ENCODE measurements at regions of chr1 and their contacts with region 1.

Region 1: DNA sequence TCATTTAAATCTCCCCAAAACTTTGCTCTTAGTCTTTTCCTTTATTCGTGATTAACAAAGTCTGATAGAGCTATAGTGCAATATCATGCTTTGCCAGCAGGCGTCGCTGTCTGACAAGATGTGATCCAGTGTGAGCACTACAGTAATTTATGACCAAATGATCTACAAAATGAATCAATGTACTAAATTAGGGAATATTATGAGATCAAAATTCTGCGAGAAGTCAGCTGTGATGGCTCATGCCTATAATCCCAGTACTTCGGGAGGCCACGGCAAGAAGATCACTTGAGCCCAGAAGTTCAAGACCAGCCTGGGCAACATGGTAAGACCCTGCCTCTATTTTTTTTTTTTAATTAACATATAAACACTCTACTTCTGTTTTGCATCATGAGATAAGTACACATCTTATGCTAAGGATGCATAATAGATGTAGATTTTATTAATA is 3.6 kb upstream of the SPSB1 start:
- DNase-seq: peak; percentile 82
- ATAC-seq: no peak

Region 2: DNA sequence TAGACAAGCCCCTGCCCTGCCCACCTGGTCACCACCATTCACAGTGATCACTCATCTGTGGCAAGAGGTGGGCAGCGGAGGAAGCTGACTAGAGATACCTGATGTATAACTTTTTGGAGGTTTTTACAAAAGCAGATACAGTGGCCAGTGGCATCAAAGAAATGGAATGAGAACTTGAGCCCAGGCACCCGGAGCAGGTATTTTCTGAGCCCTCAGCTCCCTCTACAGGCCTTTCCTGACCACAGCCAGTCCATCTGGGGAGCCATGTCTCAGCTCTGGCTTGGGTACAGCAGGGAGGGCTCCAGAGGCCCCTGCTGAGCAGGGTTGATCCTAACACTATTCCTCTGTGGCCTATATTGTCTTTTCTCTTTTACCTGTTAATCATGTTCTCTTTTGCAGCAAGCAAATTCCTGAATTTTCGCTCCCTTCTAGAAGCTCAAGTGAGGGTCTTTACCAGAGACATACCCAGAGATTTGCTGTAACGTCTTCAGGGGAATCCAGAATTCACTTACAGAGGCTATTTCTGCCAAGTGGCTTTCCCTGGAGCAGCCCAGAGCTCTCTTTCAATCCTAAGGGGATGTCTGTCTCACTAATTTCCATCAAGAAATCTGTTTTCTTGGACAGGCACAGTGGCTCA is 187.5 kb before region 1 on chr1:
- intact Hi-C with region 1: no loop called
- DNase-seq: no peak
- ATAC-seq: peak; percentile 64

Region 3: GRCh38 chr1:9455487-9456234 is 166.5 kb after region 1 on chr1:
- intact Hi-C with region 1: loop called (anchors 5 kb)
- DNase-seq: peak; percentile 83
- ATAC-seq: peak; percentile 86

Region 4: GRCh38 chr1:9481048-9481447 is 191.9 kb after region 1 on chr1:
- intact Hi-C with region 1: loop called (anchors 5 kb)
- DNase-seq: no peak
- ATAC-seq: no peak

Region 5: DNA sequence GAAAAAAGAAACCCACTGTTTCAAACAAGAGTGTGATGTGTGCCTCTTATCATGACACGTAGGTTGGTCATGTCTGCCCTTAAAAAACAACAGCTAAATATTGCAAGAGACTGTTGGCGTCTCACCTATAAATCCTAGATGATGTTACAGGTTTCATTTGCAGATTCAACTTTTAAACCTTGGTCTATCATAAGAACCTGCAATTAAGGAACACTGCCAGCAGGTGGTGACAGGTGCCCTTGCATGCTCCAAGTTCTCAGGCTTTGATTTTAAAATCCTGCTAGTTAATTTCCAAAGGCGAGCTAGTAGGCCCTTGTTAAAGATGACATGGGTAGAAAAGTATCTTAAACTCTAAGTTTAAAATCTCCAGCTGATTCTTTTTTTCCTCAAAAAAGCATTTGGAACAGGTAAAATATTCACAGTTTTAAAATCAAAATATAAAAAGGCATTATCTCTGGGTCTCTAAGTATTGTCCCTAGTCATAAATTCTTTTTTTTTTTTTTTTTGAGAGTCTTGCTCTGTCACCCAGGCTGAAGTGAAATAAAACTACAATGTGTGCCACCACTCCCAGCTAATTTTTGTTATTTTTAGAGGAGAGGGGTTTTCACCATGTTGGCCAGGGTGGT is 495.5 kb after region 1 on chr1:
- intact Hi-C with region 1: no loop called
- DNase-seq: no peak
- ATAC-seq: no peak

Measured in Right ventricle myocardium superior (tissue), 1 donor.